Breast epithelium (tissue), 4 donors: ENCODE measurements at regions of chr2 and their contacts with region 1.

Region 1: GRCh38 chr2:85750587-85751575 is 2.9 kb upstream of the ATOH8 start:
- DNase-seq: peak; percentile 62 to 72
- H3K4me3 ChIP-seq: no peak overlapping the region
- H3K27ac ChIP-seq: peak overlapping the region in 1 of 2 donors; percentile 5
- H3K4me1 ChIP-seq: peaks cover 0 to 4% of the 10 kb centered on the region in 2 donors
- H3K27me3 ChIP-seq: peaks cover 0 to 27% of the 10 kb centered on the region in 2 donors
- CTCF ChIP-seq: peak; percentile 61 to 74 (median 71)
- POLR2A ChIP-seq: no peak

Region 2: DNA sequence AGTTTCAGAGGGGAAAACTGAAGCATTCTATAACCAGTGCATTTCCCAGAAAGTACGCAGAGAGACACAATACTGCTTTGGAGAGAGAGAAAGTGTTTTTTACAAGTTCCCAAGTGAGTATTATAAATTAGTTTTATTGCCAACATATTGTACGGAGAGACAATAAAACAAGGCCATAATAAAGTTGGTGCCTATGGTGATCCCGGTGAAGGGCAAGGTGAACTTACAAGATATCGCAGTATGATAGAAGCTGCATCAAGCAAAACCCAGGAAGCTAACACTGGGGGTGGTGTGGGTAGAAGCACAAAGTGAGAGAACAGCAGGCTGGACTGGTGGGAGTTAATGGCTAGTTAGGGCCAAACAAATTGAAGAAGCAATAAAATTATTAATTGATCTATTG is 837.9 kb before region 1 on chr2:
- intact Hi-C with region 1: loop called (anchors 5 kb)
- DNase-seq: no peak
- H3K4me3 ChIP-seq: no peak overlapping the region
- H3K27ac ChIP-seq: no peak overlapping the region
- H3K4me1 ChIP-seq: no peaks in the 10 kb centered on the region
- H3K27me3 ChIP-seq: no peaks in the 10 kb centered on the region
- CTCF ChIP-seq: no peak
- POLR2A ChIP-seq: no peak

Region 3: DNA sequence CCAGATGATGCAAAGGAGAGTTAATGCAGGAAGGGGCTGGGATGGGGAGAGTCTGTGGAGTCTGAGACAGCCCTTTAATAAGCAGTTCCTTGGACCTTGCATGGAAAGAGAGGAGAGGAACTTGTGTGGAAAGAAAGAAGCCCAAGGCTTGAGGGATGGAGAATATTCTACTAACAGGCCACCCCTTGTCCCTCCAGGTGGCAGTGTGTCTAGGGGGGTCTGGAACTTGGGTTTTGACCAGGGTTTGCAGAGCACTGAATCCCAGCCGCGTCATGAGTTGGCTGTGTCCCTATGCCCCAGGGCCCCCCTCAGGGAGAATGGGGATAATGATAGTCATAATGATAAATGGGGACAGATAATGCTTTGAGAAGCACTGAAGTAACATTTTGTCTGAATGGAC is 602.7 kb before region 1 on chr2:
- intact Hi-C with region 1: no loop called
- DNase-seq: no peak
- H3K4me3 ChIP-seq: no peak overlapping the region
- H3K27ac ChIP-seq: no peak overlapping the region
- H3K4me1 ChIP-seq: no peaks in the 10 kb centered on the region
- H3K27me3 ChIP-seq: no peaks in the 10 kb centered on the region
- CTCF ChIP-seq: no peak
- POLR2A ChIP-seq: no peak

Region 4: DNA sequence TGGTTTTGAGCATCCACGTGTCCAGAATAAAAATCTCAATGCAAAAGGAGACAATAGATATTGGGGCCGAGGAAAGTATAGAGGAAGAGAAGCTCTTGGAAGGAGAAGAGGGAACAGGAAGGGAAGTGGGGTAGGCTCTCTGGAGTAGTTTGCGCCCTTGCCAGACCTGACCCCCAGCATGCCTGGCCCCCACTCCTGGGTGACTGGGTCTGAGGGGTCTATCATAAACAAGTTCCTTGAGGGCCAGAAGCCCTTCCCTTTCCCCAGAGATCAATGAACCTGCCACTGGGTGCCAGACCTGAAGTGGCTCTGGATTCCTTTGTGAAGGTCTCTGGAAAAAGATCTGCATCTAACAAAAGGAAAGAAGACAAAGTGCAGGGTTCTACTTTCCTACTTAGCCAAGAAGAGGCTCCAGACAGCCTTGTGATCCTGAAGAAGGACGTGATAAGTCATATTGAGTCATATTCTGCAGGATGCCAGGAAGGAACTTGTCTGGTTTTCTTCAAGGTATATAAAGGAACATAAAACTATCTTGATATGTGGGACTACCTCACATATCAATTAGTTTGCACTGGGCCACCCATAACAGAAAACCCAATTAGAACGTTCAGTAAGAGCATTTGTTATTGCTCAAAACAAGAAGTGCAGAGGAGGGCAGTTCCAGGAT is 15.8 kb before region 1 on chr2:
- intact Hi-C with region 1: loop called (anchors 1 kb)
- DNase-seq: no peak
- H3K4me3 ChIP-seq: no peak overlapping the region
- H3K27ac ChIP-seq: no peak overlapping the region
- H3K4me1 ChIP-seq: no peaks in the 10 kb centered on the region
- H3K27me3 ChIP-seq: no peaks in the 10 kb centered on the region
- CTCF ChIP-seq: no peak
- POLR2A ChIP-seq: no peak

Region 5: GRCh38 chr2:85785027-85785822 is 34.3 kb after region 1 on chr2:
- intact Hi-C with region 1: loop called (anchors 1 kb)
- DNase-seq: peak in 1 of 2 donors; percentile 45
- H3K4me3 ChIP-seq: peak overlapping the region in 2 of 3 donors; percentile 0 to 25
- H3K27ac ChIP-seq: peak overlapping the region; percentile 23 to 68
- H3K4me1 ChIP-seq: no peaks in the 10 kb centered on the region
- H3K27me3 ChIP-seq: no peaks in the 10 kb centered on the region
- CTCF ChIP-seq: no peak
- POLR2A ChIP-seq: no peak